Sigmoid colon (tissue), 7 donors: ENCODE measurements at regions of chr7 and their contacts with region 1.

Region 1: DNA sequence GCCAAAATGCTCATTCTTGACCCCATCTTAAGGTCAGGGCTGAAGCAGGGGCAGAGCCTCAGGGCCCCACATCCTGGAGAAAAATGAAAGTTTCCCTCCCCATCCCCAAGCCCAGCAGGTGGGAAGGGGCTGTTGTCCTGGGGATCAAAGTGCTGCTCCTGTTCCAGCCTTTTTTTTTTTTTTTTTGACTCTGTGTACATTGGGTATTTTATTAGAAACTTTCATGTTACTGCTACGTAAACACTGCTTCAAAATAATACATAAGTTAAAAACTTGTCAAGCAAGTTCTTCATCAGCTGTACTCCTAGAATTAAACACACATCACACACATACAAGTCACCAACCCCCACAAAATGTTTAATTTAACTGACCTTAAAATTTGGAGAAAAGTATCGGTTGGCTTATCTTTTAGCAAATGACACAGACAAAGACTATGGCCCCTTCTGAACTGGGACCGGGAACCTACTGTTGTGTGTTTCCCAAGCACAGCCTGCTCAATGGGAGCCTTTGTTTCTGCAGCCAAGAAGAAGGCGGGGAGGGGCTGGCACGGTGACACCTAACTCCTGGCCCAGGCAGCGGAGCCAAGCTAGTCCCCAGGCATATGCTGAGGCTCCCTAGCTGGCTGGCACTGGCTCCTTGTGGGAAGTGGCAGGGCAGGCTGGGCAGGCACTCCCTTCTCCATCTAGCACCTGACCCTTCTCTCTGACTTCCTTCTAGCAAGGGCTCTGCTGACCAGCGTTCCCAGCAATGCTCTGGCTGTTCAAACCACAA is 325.2 kb downstream of the PLXNA4 start:
- DNase-seq: peak; percentile 92
- H3K4me3 ChIP-seq: no peak overlapping the region
- H3K27ac ChIP-seq: peak overlapping the region in 3 of 4 donors; percentile 60 to 82 (median 69)
- H3K4me1 ChIP-seq: peaks cover 0 to 47% (median 43%) of the 10 kb centered on the region in 4 donors
- H3K27me3 ChIP-seq: no peaks in the 10 kb centered on the region
- CTCF ChIP-seq: no peak
- EP300 ChIP-seq: no peak
- POLR2A ChIP-seq: no peak

Region 2: GRCh38 chr7:131945313-131945911 is 305.7 kb before region 1 on chr7:
- intact Hi-C with region 1: loop called (anchors 5 kb)
- DNase-seq: no peak
- H3K4me3 ChIP-seq: peak overlapping the region in 3 of 4 donors; percentile 12 to 32 (median 26)
- H3K27ac ChIP-seq: no peak overlapping the region
- H3K4me1 ChIP-seq: peaks cover 0 to 15% (median 9%) of the 10 kb centered on the region in 4 donors
- H3K27me3 ChIP-seq: peaks cover 0 to 14% (median 6%) of the 10 kb centered on the region in 3 donors
- CTCF ChIP-seq: peak; percentile 29 to 92 (median 84)
- EP300 ChIP-seq: no peak
- POLR2A ChIP-seq: no peak

Region 3: DNA sequence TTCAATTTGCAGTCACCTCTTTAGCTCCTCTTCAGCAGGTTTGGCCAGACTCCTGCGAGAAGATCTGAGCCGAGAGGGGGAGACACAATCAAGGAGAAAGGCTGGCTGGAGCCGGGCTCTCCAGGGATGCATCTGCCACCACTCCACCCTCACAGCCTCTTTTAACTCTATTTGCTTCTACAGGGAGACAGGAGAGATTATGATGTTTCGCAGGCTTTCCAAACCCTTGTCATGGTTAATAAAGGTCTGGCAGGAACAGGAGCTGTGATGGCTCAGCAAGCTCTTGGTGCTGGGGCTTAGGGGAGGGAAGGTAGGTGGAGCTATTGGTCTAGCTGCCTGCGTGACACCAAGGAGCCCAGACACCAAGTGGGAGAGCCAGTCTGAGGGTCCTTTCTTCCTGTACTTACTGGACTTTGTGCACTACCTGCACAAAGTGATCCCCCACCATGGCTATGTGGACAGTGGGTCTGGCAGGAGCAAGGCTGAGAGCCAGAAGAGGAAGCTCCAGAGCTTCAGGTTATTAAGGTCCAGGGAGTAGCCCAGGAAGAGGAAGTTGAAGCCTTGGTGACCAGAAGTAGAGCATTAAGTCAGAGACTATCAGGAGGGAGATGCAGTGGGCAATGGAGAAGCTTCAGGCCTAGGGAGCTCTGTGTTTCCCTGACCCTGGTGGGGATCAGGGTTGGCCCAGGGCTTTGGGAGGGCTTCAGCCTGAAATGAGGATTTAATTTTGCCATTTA is 246.4 kb before region 1 on chr7:
- intact Hi-C with region 1: loop called (anchors 5 kb)
- DNase-seq: no peak
- H3K4me3 ChIP-seq: no peak overlapping the region
- H3K27ac ChIP-seq: peak overlapping the region in 1 of 4 donors; percentile 0
- H3K4me1 ChIP-seq: peaks cover 0 to 9% (median 5%) of the 10 kb centered on the region in 4 donors
- H3K27me3 ChIP-seq: no peaks in the 10 kb centered on the region
- CTCF ChIP-seq: peak in 2 of 4 experiments; percentile 19 to 42
- EP300 ChIP-seq: no peak
- POLR2A ChIP-seq: no peak

Region 4: GRCh38 chr7:132394283-132395198 is 143.5 kb after region 1 on chr7:
- intact Hi-C with region 1: loop called (anchors 10 kb)
- DNase-seq: no peak
- H3K4me3 ChIP-seq: no peak overlapping the region
- H3K27ac ChIP-seq: peak overlapping the region; percentile 53 to 75 (median 64)
- H3K4me1 ChIP-seq: peaks cover 0 to 27% (median 16%) of the 10 kb centered on the region in 4 donors
- H3K27me3 ChIP-seq: no peaks in the 10 kb centered on the region
- CTCF ChIP-seq: no peak
- EP300 ChIP-seq: peak in 1 of 4 donors; percentile 26
- POLR2A ChIP-seq: no peak